Dendritic cell treated with granulocyte-macrophage colony-stimulating factor and Interleukin-4, amounts not matched to agents 40 ng/mL and 50 ng/mL, for 4 days (primary cell): ENCODE measurements at regions of chr17 and their contacts with region 1.

Region 1: GRCh38 chr17:82751571-82752370 is at the start of gene TBCD:
- H3K4me3 Mint-ChIP-seq: peak within 1 kb of the TSS; percentile 80
- H3K27ac Mint-ChIP-seq: peak within 1 kb of the TSS; percentile 60
- H3K4me1 Mint-ChIP-seq: peaks cover 34% of the 10 kb centered on the region
- H3K27me3 Mint-ChIP-seq: peaks cover 13% of the 10 kb centered on the region

Region 2: GRCh38 chr17:82577300-82577699 is 174.5 kb before region 1 on chr17:
- intact Hi-C with region 1: no loop called
- H3K4me3 Mint-ChIP-seq: no peak overlapping the region
- H3K27ac Mint-ChIP-seq: no peak overlapping the region
- H3K4me1 Mint-ChIP-seq: peaks cover 21% of the 10 kb centered on the region
- H3K27me3 Mint-ChIP-seq: no peaks in the 10 kb centered on the region

Region 3: DNA sequence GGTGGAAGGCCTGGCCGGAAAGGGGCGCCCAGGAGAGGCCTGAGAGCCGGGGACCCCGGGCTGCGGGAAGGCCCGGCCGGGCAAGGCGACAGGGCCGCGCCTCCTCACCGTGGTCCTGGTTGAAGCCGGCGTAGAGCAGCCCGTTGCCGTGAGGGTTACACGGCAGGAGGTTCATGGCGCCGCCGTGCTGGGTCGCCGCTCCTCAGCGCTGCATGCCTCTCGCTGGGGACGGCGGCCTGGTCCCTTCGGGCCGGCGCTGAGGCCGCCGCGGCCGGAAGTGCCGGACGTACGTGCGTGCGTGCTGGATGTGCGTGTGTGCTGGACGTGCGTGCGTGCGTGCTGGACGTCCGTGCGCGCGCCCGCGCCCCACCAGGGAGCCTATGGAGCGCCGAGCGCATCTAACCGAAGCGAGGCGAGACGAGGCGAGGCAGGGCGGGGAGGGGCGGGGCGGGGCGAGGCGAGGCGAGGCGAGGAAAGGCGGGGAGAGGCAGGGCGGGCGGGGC is 103.6 kb before region 1 on chr17 and contains the start of gene WDR45B:
- intact Hi-C with region 1: loop called (anchors 2 kb)
- H3K4me3 Mint-ChIP-seq: peak within 1 kb of the TSS; percentile 81
- H3K27ac Mint-ChIP-seq: peak within 1 kb of the TSS; percentile 66
- H3K4me1 Mint-ChIP-seq: peaks cover 40% of the 10 kb centered on the region
- H3K27me3 Mint-ChIP-seq: no peaks in the 10 kb centered on the region

Region 4: GRCh38 chr17:82698974-82699442 is 52.8 kb before region 1 on chr17:
- intact Hi-C with region 1: no loop called
- H3K4me3 Mint-ChIP-seq: peak overlapping the region; percentile 78
- H3K27ac Mint-ChIP-seq: peak overlapping the region; percentile 39
- H3K4me1 Mint-ChIP-seq: peaks cover 17% of the 10 kb centered on the region
- H3K27me3 Mint-ChIP-seq: peaks cover 43% of the 10 kb centered on the region

Region 5: DNA sequence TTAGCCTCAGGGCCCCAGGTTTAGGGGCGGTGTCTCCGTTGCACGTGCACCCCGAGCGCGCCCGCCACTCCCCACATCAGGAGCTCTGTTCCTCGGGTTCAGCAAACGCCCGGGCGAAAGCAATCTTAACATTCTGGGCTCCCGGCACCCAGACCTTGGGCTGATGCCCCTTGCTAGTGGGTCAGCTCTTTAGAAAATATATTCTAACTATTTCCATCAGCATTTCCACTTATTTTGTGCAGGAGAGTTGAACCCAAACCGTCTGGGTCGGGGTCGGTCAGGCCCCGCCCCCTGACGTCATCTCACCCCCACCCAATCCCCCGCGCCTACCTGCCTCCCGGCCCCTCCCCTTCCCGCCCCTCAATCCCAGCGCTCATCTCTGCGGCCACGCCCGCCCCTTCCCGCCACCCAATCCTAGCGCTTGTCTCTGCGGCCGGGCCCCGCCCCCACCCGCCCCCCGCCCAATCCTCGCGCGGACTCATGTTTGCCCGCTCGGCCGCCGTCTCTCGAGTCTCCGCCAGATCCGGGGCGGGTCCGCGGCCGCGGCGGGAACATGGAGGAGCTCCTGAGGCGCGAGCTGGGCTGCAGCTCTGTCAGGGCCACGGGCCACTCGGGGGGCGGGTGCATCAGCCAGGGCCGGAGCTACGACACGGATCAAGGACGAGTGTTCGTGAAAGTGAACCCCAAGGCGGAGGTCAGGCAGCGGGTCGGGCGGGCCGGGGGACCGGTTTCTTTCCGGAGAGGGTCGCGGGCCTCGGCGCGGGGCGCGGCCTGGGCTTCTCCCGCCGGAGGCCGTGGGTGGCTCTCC is 35.4 kb before region 1 on chr17 and contains the start of gene FN3KRP:
- intact Hi-C with region 1: loop called (anchors 1 kb)
- H3K4me3 Mint-ChIP-seq: peak within 1 kb of the TSS; percentile 94
- H3K27ac Mint-ChIP-seq: peak within 1 kb of the TSS; percentile 84
- H3K4me1 Mint-ChIP-seq: peaks cover 18% of the 10 kb centered on the region
- H3K27me3 Mint-ChIP-seq: no peaks in the 10 kb centered on the region

Region 6: GRCh38 chr17:82781894-82782274 is 30.1 kb after region 1 on chr17:
- intact Hi-C with region 1: no loop called
- H3K4me3 Mint-ChIP-seq: no peak overlapping the region
- H3K27ac Mint-ChIP-seq: no peak overlapping the region
- H3K4me1 Mint-ChIP-seq: peaks cover 13% of the 10 kb centered on the region
- H3K27me3 Mint-ChIP-seq: peaks cover 4% of the 10 kb centered on the region